Sigmoid colon (tissue), 7 donors: ENCODE measurements at regions of chr2 and their contacts with region 1.

Region 1: DNA sequence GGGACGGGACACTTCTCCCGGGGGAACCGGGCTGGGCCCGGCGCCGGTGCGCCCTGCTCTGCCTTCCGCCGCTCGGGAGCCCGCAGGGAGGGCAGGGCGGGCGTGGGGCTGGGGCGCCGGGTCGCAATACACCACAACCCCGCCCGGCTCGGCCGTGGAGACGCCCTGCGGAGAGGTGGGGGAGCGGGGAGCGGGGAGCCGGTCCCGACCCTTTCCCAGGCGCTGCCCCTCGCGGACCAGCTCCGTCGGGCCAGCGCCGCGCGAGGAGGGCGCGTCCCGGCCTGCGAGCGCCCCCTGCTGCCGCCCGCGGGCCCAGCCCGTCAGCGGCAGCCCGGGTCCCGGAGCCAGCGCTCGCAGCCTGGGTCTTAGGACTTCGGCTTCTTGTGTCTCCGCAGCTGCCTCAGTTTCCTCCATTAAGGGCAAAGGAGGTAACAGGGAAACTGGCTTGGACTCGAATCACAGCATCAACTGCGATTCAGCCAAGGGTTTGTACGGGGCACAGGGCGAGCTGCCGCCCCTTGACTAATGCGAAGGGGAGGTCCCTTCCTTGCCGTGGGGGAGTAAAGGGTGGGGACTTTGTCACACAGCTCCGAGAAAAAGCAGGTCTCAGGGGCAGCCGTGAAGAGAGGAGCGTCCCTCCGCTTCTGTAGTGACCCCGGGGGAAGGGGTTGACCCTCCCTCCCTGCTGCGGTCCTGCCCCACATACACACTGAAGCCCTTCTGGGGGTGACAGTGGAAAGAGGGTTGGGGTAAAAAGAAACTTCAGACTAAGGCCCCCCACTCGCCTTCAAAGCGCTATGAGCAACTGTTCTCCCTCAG is 717 bp upstream of the ADRA2B start:
- DNase-seq: no peak
- H3K4me3 ChIP-seq: peak overlapping the region; percentile 3 to 59 (median 50)
- H3K27ac ChIP-seq: peak overlapping the region in 3 of 4 donors; percentile 7 to 51 (median 20)
- H3K4me1 ChIP-seq: peaks cover 0 to 18% (median 17%) of the 10 kb centered on the region in 4 donors
- H3K27me3 ChIP-seq: peaks cover 25 to 55% (median 31%) of the 10 kb centered on the region in 3 donors
- CTCF ChIP-seq: peak in 2 of 4 experiments; percentile 22 to 81
- EP300 ChIP-seq: no peak
- POLR2A ChIP-seq: no peak

Region 2: DNA sequence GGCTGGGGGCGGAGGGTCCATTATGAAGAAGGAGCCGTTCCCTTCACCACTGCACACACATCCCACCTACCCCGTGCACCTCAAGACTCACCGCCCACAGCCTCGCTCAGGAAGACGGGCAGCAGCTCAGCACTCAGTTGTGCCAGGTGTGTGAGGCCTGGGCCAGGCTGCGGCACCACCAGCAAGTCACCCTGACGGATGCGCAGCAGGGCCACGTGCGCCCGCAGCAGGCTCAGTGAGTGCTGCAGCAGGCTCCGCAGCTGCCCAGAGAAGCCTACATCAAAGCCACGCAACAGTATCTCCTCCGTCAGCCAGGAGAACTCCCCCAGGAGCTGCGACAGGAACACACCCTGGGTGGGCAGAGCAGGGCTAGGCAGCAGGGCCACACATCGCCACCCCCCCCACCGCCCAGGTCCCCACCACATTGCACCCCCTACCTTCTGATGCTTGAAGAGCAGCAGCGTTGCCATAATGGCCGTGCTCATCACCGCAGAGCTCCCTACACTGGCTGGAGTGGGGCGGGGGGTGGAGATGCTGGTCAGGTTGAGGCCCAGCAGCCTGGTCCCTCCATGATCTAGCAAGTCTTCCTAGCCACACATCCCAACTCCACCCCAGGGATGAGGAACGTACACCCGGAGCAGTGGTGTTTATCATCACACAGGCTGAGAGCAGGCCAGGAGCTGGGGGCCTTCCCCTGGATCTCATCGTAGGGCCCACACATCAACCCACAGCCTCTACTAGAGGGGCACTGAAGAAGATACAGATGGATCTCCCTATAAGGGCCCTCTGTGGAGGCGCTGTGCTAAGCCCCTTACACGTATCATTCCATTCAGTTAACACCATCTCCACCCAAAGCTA is 92.5 kb before region 1 on chr2:
- intact Hi-C with region 1: loop called (anchors 10 kb)
- DNase-seq: no peak
- H3K4me3 ChIP-seq: no peak overlapping the region
- H3K27ac ChIP-seq: no peak overlapping the region
- H3K4me1 ChIP-seq: no peaks in the 10 kb centered on the region
- H3K27me3 ChIP-seq: no peaks in the 10 kb centered on the region
- CTCF ChIP-seq: no peak
- EP300 ChIP-seq: no peak
- POLR2A ChIP-seq: no peak